Heart right ventricle (tissue), 16 donors: ENCODE measurements at regions of chr16 and their contacts with region 1.

Region 1: DNA sequence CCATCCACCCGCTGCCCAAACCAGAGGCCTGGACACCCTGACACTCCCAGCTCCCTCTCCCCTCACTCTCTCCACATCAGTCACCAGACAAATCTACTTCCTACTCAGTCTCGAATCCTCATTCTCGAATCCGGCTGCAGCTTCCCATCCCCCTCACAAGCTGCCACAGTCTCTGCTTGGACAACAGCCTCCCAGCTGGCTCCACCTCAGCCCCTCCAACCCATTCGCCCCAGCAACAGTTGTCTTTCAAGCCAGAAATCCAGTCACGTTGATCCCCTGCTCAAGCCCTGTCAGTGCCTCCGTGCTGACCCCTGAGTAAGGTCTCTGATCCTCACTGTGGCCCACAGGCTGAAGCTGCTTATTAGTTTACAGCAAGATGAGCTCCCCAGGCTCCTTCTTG is 44.2 kb upstream of the MTSS2 start:
- DNase-seq: no peak
- ATAC-seq: no peak
- H3K4me3 ChIP-seq: no peak overlapping the region
- H3K27ac ChIP-seq: peak overlapping the region in 7 of 10 donors; percentile 31 to 70 (median 47)
- H3K4me1 ChIP-seq: peaks cover 17 to 63% (median 33%) of the 10 kb centered on the region in 9 donors
- H3K27me3 ChIP-seq: no peaks in the 10 kb centered on the region
- CTCF ChIP-seq: no peak

Region 2: DNA sequence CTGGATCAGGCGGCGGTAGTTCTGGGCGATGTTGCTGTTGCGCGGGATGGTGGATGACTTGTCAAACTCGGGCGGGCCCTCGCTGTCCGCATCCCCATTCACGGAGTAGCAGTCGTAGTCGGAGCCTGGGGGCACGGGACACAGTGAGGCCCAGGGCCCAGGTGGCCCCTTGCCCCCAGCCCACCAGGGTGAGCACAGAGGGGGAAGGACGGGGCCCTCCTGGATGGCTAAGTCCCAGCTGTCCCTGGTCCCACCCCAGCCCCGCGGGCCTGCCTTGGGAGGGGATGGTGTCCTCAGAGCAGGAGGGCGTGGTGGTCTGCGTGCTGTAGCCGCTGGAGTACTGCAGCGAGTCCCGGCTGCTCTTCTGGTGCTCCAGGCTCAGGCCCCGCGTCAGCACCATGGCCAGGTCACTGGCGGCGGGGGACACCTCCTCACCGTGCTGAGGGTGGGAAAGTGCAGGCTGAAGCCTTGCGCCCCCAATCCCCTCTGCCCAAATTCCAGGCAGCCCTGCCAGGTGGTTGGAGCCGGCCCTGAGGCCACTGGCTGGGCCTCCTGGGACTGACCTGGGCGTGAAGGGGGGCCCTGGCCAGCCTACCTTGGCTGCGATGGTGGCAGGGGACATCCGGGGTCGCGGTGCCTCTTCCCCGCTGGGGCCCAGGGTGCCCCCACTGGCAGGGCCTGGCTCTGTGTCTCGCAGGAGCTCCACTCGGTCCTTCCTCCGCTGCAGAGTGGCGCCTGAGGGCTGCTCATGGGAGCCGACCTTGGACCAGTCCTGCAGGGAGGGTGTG is 65.5 kb before region 1 on chr16:
- intact Hi-C with region 1: no loop called
- DNase-seq: no peak
- ATAC-seq: peak in 1 of 8 donors; percentile 18
- H3K4me3 ChIP-seq: no peak overlapping the region
- H3K27ac ChIP-seq: no peak overlapping the region
- H3K4me1 ChIP-seq: peaks cover 0 to 37% (median 9%) of the 10 kb centered on the region in 9 donors
- H3K27me3 ChIP-seq: no peaks in the 10 kb centered on the region
- CTCF ChIP-seq: no peak

Region 3: DNA sequence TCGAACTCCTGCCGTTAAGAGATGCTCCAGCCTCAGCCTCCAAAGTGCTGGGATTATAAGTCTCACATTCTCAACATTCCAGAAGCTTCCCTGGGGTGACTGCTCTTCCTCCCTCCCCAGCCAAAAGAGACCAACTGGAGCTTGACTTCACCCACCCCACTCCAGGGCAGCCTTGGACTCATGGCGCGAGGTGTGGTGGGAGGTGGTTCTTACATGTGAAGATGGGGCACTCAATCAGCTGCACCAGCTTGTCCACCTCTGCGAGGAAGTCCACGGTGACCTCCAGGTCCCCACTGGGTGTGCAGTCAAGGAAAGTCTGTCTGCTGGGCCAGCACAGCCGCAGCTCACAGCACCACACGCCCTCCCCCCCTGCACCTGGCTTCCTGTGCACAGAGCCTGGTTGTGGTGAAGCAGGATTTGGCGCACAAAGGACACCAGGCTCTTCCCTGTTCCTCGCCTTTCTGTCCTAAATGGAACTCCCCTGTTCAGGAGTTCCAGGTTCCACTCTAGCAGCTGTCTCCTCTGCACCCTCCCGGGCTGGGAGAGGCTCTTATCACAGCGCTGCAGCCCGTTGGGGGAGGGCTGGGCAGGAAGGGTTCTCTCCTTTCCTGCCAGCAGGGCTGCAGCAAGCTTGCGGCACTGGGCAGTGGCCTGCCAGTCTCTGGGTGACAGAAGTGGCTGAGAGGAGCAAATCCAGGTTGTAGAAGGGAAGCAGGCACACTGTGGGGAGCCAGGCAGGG is 34.5 kb before region 1 on chr16:
- intact Hi-C with region 1: loop called in 1 of 10 experiments (anchors 5 kb)
- DNase-seq: peak; percentile 64 to 73
- ATAC-seq: peak in 7 of 8 donors; percentile 20 to 55 (median 46)
- H3K4me3 ChIP-seq: no peak overlapping the region
- H3K27ac ChIP-seq: peak overlapping the region; percentile 17 to 94 (median 76)
- H3K4me1 ChIP-seq: peaks cover 59 to 99% (median 88%) of the 10 kb centered on the region in 9 donors
- H3K27me3 ChIP-seq: no peaks in the 10 kb centered on the region
- CTCF ChIP-seq: peak in 3 of 9 donors; percentile 25 to 31 (median 29)